MCF 10A (cell line): ENCODE measurements at regions of chr1 and their contacts with region 1.

Region 1: DNA sequence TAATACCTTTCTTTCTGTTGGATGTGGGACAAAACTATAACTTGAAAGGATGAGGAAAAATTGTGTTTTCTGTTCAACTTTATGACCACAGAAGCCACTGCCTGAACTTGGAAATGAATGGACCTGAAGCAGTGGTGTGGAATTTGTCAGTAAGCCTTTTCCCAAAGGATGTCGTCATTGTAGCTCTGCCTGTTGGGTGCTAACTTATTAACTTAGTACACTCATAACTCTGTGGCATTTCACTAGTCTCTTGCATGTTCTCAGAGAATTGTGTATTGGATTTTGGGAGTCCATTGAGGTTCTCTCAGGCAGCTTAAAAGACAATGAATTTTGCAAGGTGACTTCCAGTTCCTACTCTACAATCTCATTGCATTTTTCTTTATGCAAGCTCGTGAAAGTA is 49.6 kb downstream of the KCNK2 start:
- DNase-seq: peak; percentile 44
- H3K4me3 Mint-ChIP-seq: no peak overlapping the region
- H3K27ac Mint-ChIP-seq: no peak overlapping the region
- H3K4me1 Mint-ChIP-seq: peaks cover 21% of the 10 kb centered on the region
- H3K27me3 Mint-ChIP-seq: no peaks in the 10 kb centered on the region
- CTCF ChIP-seq: no peak

Region 2: DNA sequence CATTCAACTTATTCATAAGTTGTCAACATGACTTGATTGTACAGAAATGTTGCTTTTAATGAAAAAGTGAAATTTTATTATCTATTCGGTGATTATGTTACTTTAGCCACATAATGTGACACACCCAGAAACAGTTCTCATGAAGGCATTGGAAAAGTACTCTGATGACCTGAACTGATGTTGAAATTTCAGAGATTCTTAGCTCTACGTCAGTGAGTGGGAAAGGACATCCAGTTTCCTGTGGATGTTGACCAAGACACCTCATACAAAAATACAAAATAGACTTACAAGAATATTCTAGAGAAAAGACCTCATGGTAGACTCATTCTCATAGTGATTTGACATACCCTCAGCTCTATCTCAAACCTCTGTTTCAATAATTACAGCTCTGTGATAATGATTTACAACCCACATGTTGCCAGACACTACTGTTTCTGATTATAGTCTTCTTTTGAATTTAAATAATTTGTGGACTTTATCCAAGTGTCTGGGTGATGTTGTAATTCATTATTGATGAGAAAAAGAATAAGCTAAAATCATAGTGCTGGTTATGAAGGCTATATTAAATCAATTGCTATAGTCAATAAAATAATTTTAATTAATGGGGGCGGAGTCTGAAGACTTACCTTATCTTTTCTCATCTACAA is 12.3 kb before region 1 on chr1:
- CTCF ChIA-PET with region 1: interaction called, 8 read pairs
- POLR2A ChIA-PET with region 1: interaction called, 54 read pairs
- intact Hi-C with region 1: no loop called
- DNase-seq: peak; percentile 88
- H3K4me3 Mint-ChIP-seq: peak overlapping the region; percentile 2
- H3K27ac Mint-ChIP-seq: peak overlapping the region; percentile 97
- H3K4me1 Mint-ChIP-seq: peaks cover 48% of the 10 kb centered on the region
- H3K27me3 Mint-ChIP-seq: no peaks in the 10 kb centered on the region
- CTCF ChIP-seq: no peak